ENCODE measurements at regions of chr12 and their contacts with region 1.

Region 1: GRCh38 chr12:569803-570434 is 93.3 kb downstream of the NINJ2 start:
- DNase-seq: no peak
- H3K4me3 ChIP-seq: peak overlapping the region; percentile 63
- CTCF ChIP-seq: peak; percentile 99

Region 2: GRCh38 chr12:553205-554000 is 16.5 kb before region 1 on chr12:
- CTCF ChIA-PET with region 1: interaction called, 13 read pairs
- POLR2A ChIA-PET with region 1: no interaction called
- DNase-seq: no peak
- H3K4me3 ChIP-seq: no peak overlapping the region
- CTCF ChIP-seq: no peak

Region 3: GRCh38 chr12:851913-852312 is 282.0 kb after region 1 on chr12:
- CTCF ChIA-PET with region 1: interaction called, 14 read pairs
- POLR2A ChIA-PET with region 1: no interaction called
- DNase-seq: no peak
- H3K4me3 ChIP-seq: no peak overlapping the region
- CTCF ChIP-seq: no peak